Activated CD4-positive, alpha-beta memory T cell treated with anti-CD3 and anti-CD28 coated beads, Interleukin-2, amount 10 ng/mL, durations not matched to agents 7 days and 5 days (primary cell): ENCODE measurements at regions of chr6 and their contacts with region 1.

Region 1: GRCh38 chr6:139219271-139219729 is 72.5 kb downstream of the TXLNB start:
- DNase-seq: peak; percentile 83
- H3K4me3 Mint-ChIP-seq: no peak overlapping the region
- H3K27ac Mint-ChIP-seq: peak overlapping the region; percentile 59
- H3K4me1 Mint-ChIP-seq: peaks cover 13% of the 10 kb centered on the region
- H3K27me3 Mint-ChIP-seq: no peaks in the 10 kb centered on the region

Region 2: DNA sequence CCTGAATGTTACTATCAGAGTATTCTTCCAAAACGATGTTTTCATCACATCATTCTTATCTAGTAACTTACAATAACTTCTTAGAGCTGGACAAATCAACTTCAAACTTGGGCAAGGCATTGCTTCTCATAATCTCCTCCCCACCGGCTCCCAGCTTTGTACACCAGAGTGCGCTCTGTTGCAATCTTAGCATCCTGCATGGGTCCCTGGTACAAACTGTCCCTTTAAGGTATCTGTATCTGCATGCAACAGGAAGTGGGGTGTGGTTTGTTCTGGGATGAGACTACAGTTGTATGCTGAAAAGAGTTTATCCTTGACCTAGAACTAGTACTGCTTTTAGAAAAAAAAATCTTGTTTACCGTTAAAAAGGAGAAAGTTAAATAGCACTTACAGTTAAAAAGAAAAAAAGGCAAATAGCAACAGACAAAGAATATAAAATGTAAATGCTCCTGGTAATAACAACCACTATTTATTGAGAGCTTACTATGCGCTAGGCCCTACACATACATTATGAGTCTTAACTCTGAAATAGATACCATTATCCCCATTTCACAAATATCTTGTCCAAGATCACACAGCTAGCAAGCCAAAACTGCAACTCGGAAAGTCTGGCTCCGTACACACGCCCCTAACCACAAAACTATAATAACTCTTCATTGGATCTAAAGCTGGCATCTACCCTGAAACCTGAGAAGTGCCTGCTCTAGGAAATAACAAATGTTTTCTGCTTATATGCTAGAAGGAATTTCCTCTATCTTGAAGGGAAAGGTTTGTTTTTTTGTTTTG is 94.2 kb before region 1 on chr6:
- CTCF ChIA-PET with region 1: interaction called, 20 read pairs
- POLR2A ChIA-PET with region 1: interaction called, 8 read pairs
- DNase-seq: peak; percentile 87
- H3K4me3 Mint-ChIP-seq: peak overlapping the region; percentile 49
- H3K27ac Mint-ChIP-seq: peak overlapping the region; percentile 95
- H3K4me1 Mint-ChIP-seq: peaks cover 41% of the 10 kb centered on the region
- H3K27me3 Mint-ChIP-seq: no peaks in the 10 kb centered on the region

Region 3: GRCh38 chr6:139243536-139243935 is 24.2 kb after region 1 on chr6:
- CTCF ChIA-PET with region 1: interaction called, 12 read pairs
- POLR2A ChIA-PET with region 1: interaction called, 3 read pairs
- DNase-seq: no peak
- H3K4me3 Mint-ChIP-seq: no peak overlapping the region
- H3K27ac Mint-ChIP-seq: no peak overlapping the region
- H3K4me1 Mint-ChIP-seq: peaks cover 15% of the 10 kb centered on the region
- H3K27me3 Mint-ChIP-seq: no peaks in the 10 kb centered on the region

Region 4: DNA sequence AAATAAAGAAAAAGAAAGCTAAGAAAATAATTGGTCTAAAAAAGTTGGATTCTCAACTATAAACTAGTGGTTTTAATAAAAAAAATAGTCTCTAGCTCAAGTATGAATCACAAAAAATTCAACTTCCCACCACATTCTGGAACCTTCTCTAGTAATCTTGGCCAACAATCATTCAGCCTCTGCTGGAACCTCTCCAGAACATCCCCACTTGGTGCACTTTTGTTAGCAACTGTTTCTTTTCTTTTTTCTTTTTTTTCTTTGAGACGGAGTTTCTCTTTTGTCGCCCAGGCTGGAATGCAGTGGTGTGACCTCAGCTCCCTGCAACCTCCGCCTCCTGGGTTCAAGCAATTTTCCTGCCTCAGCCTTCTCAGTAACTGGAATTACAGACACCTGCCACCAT is 36.8 kb after region 1 on chr6:
- CTCF ChIA-PET with region 1: interaction called, 47 read pairs
- POLR2A ChIA-PET with region 1: interaction called, 15 read pairs
- DNase-seq: no peak
- H3K4me3 Mint-ChIP-seq: no peak overlapping the region
- H3K27ac Mint-ChIP-seq: no peak overlapping the region
- H3K4me1 Mint-ChIP-seq: peaks cover 35% of the 10 kb centered on the region
- H3K27me3 Mint-ChIP-seq: no peaks in the 10 kb centered on the region

Region 5: DNA sequence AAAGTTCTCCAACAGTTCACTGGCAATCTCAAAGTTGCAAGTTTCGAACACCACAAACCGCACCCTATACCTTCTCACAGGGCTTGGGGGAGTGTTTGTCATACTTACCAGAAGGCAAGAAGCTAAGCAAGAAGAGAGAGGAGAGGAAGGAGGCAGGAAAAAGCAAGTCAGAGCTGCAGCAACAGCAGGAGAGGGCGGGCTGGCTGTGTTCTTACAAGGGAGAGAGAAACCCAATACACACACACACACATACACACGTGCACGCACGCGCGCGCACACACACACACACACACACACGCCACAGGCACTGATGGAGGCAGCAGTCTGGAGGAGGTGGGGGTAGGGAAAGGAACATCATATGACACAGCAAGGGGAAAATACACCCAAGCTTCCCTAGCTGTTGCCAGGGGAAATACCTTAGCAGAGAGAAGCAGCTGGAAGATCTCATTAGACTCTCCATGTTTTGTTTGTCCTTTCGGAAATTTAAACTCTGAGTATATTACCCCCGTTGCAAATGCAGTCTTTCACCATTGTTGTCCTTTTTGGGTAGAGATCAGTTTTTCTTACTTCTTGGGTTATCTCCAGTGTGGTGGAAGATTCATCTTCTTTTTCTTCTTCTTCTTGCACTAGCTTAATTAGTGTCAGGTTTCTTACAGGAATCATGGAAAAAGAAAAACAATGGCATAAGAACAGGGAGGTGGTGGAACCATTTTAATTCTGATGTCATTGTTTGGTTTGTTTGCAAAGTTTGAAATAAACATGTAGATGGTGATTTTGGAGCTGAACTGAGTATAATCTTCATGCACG is 72.7 kb after region 1 on chr6 and contains the start of gene TXLNB:
- CTCF ChIA-PET with region 1: interaction called, 28 read pairs
- POLR2A ChIA-PET with region 1: interaction called, 34 read pairs
- DNase-seq: peak; percentile 89
- H3K4me3 Mint-ChIP-seq: peak within 1 kb of the TSS; percentile 74
- H3K27ac Mint-ChIP-seq: peak within 1 kb of the TSS; percentile 96
- H3K4me1 Mint-ChIP-seq: peaks cover 32% of the 10 kb centered on the region
- H3K27me3 Mint-ChIP-seq: no peaks in the 10 kb centered on the region
- total RNA-seq, gene TXLNB: 0.60 to 0.90 TPM

Region 6: DNA sequence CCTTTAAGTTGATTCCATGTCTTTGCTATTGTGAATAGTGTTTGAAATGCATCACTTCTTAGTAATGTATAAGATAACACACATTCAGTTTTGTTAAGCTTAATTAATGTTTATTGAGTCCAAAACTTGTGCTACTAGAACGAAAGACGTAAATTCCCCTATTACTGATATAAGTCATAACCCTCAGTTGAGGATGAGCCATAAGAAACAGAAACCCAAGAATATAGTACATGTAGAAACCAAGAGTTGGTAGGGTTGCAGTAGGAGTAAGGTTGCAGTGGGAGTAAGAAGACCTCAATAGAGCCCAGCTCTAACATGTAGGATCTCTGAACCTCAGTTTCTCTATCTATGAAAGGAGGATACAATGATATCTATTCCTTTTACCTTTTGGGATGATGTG is 135.9 kb after region 1 on chr6:
- CTCF ChIA-PET with region 1: interaction called, 21 read pairs
- POLR2A ChIA-PET with region 1: interaction called, 5 read pairs
- DNase-seq: no peak
- H3K4me3 Mint-ChIP-seq: no peak overlapping the region
- H3K27ac Mint-ChIP-seq: no peak overlapping the region
- H3K4me1 Mint-ChIP-seq: no peaks in the 10 kb centered on the region
- H3K27me3 Mint-ChIP-seq: no peaks in the 10 kb centered on the region

Region 7: DNA sequence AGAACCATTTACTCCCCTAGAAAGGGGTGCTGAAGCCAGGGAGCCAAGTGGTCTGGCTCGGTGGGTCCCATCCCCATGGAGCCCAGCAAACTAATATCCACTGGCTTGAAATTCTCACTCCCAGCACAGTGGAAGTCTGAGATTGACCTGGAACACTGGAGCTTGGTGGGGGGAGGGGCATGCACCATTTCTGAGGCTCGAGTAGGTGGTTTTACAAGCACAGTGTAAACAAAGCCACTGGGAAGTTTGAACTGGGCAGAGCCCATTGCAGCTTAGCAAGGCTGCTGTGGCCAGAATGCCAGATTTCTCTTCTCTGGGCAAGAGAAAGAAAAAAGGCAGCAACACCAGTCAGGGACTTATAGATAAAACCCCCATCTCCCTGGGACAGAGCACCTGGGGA is 1011.0 kb after region 1 on chr6:
- CTCF ChIA-PET with region 1: no interaction called
- POLR2A ChIA-PET with region 1: no interaction called
- DNase-seq: no peak
- H3K4me3 Mint-ChIP-seq: no peak overlapping the region
- H3K27ac Mint-ChIP-seq: no peak overlapping the region
- H3K4me1 Mint-ChIP-seq: no peaks in the 10 kb centered on the region
- H3K27me3 Mint-ChIP-seq: no peaks in the 10 kb centered on the region